ENCODE measurements at regions of chr15 and their contacts with region 1.

Region 1: GRCh38 chr15:69576035-69576526 is 123.5 kb downstream of the RPLP1 start:
- DNase-seq: peak; percentile 69 to 77 (median 71)
- H3K4me3 ChIP-seq: no peak overlapping the region
- H3K4me3 Mint-ChIP-seq: peak overlapping the region in 1 of 2 donors; percentile 35
- H3K27ac ChIP-seq: no peak overlapping the region
- H3K27ac Mint-ChIP-seq: peak overlapping the region; percentile 55 to 78 (median 63)
- H3K4me1 ChIP-seq: peaks cover 24 to 29% of the 10 kb centered on the region in 2 donors
- H3K4me1 Mint-ChIP-seq: peaks cover 45% of the 10 kb centered on the region
- H3K27me3 ChIP-seq: no peaks in the 10 kb centered on the region
- H3K27me3 Mint-ChIP-seq: peaks cover 9 to 11% (median 11%) of the 10 kb centered on the region in 3 donors
- CTCF ChIP-seq: peak; percentile 82

Region 2: GRCh38 chr15:69523010-69524001 is 52.8 kb before region 1 on chr15:
- intact Hi-C with region 1: loop called in 1 of 2 experiments (anchors 5 kb)
- DNase-seq: peak; percentile 47 to 56 (median 49)
- H3K4me3 ChIP-seq: no peak overlapping the region
- H3K4me3 Mint-ChIP-seq: no peak overlapping the region
- H3K27ac ChIP-seq: no peak overlapping the region
- H3K27ac Mint-ChIP-seq: peak overlapping the region in 2 of 7 donors; percentile 6 to 20
- H3K4me1 ChIP-seq: no peaks in the 10 kb centered on the region
- H3K4me1 Mint-ChIP-seq: peaks cover 3% of the 10 kb centered on the region
- H3K27me3 ChIP-seq: no peaks in the 10 kb centered on the region
- H3K27me3 Mint-ChIP-seq: peaks cover 3 to 5% (median 3%) of the 10 kb centered on the region in 3 donors
- CTCF ChIP-seq: peak; percentile 79

Region 3: GRCh38 chr15:69666411-69666882 is 90.4 kb after region 1 on chr15:
- intact Hi-C with region 1: loop called in 1 of 2 experiments (anchors 5 kb)
- DNase-seq: peak; percentile 86 to 91 (median 89)
- H3K4me3 ChIP-seq: peak overlapping the region in 1 of 3 experiments; percentile 56
- H3K4me3 Mint-ChIP-seq: peak overlapping the region; percentile 59 to 86
- H3K27ac ChIP-seq: peak overlapping the region; percentile 97 to 99
- H3K27ac Mint-ChIP-seq: peak overlapping the region; percentile 97 to 100 (median 99)
- H3K4me1 ChIP-seq: peaks cover 65 to 71% of the 10 kb centered on the region in 2 donors
- H3K4me1 Mint-ChIP-seq: peaks cover 65% of the 10 kb centered on the region
- H3K27me3 ChIP-seq: no peaks in the 10 kb centered on the region
- H3K27me3 Mint-ChIP-seq: peaks cover 2 to 4% (median 4%) of the 10 kb centered on the region in 3 donors
- CTCF ChIP-seq: no peak

Region 4: DNA sequence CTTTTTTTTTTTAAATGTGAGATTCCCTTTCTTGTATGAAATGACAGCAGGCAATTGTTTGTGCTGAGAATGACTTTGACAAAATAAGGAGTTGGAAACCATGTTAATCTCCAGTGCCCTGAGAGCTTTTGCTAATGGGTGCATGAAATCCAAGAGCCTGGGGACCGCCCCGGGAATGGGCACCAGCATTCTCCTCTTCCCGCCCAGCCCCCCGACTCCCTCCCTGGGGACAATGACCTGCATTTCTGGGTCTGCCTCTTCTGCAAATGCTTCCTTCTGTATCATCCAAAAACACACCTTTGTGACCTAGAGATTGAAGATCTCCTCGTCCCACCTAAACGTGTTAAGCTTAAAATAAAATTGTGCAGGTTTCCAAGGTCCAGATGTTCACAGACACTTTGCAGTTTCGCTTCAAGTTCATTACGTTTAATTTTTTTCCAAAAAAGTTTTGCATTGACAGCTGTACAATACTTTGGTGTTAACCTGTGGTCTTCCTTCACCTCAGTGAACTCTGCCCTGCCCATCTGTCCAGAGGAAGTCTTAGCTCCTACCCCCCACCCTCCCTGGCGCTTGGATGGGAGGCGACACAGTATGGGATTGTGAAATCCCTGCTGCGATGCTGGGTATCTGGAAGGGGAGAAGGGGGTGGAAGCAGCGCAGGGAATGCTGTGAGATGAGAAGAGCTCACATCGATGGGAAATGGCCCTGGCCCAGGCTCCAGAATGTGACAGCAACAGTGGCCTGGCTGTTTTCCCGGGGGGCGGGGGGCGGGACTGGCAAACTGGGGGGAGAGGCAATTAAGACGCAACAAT is 471.5 kb after region 1 on chr15:
- intact Hi-C with region 1: loop called in 1 of 2 experiments (anchors 10 kb)
- DNase-seq: no peak
- H3K4me3 ChIP-seq: no peak overlapping the region
- H3K4me3 Mint-ChIP-seq: no peak overlapping the region
- H3K27ac ChIP-seq: no peak overlapping the region
- H3K27ac Mint-ChIP-seq: peak overlapping the region in 3 of 7 donors; percentile 28 to 68 (median 55)
- H3K4me1 ChIP-seq: no peaks in the 10 kb centered on the region
- H3K4me1 Mint-ChIP-seq: peaks cover 3% of the 10 kb centered on the region
- H3K27me3 ChIP-seq: no peaks in the 10 kb centered on the region
- H3K27me3 Mint-ChIP-seq: no peaks in the 10 kb centered on the region
- CTCF ChIP-seq: no peak

Measured in CD14-positive monocyte (primary cell).